ENCODE measurements at regions of chr1 and their contacts with region 1.

Region 1: GRCh38 chr1:210407207-210407886 is 78.6 kb downstream of the HHAT start:
- DNase-seq: peak; percentile 35
- H3K4me3 ChIP-seq: no peak overlapping the region
- CTCF ChIP-seq: peak; percentile 88

Region 2: GRCh38 chr1:210321552-210321951 is 85.8 kb before region 1 on chr1:
- in situ Hi-C with region 1: no loop called
- DNase-seq: no peak
- H3K4me3 ChIP-seq: no peak overlapping the region
- CTCF ChIP-seq: no peak

Region 3: GRCh38 chr1:210366767-210367166 is 40.6 kb before region 1 on chr1:
- in situ Hi-C with region 1: loop called (anchors 5 kb)
- DNase-seq: no peak
- H3K4me3 ChIP-seq: no peak overlapping the region
- CTCF ChIP-seq: no peak

Region 4: GRCh38 chr1:210448297-210448892 is 41.0 kb after region 1 on chr1:
- in situ Hi-C with region 1: loop called (anchors 5 kb)
- DNase-seq: peak; percentile 42
- H3K4me3 ChIP-seq: no peak overlapping the region
- CTCF ChIP-seq: peak; percentile 53

Region 5: GRCh38 chr1:210489491-210489890 is 82.1 kb after region 1 on chr1:
- in situ Hi-C with region 1: no loop called
- DNase-seq: peak; percentile 18
- H3K4me3 ChIP-seq: no peak overlapping the region
- CTCF ChIP-seq: no peak

Region 6: DNA sequence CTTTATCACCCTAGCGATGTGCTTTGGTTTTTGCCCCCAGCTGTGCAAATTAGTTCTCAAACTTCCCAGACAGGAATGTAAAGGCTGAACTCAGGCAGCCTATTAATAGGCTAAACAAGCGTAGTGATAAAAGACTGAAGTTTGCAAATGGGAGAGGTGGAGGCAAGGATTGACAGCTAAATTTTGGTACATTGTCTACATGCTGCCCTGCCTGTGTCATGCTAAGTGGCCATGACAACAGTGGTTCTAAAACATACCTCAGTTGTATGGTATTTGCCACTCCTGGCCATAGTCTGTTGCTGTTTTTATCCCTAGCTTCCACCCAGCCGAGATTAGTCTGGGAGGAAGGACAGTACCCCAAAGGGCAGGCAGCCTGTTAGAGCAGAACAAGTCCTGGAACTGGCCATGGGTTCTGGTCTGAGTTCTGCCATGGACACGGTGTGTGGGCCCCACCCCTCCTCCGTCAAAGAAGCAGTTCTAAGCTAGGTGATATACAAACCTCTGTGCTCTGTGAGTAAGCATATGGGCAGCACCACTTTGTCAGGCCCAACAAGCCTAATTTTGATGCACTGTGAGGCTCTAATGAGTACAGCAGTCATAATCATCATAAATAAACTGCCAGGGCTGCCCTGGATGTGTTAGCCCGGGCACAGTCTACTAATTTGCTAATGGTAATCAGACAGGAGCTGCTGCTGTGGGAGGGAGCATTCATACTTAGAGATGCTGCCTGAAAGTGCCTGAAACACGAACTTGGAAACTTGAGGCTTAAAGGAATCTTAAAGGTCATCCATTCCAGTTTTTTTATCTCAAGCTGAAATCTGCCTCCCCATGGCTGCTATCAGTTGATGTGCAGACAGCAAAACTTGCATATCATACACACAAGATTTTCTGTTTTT is 98.5 kb after region 1 on chr1:
- in situ Hi-C with region 1: no loop called
- DNase-seq: no peak
- H3K4me3 ChIP-seq: no peak overlapping the region
- CTCF ChIP-seq: no peak

Measured in astrocyte of the cerebellum (primary cell).